IMR-90 (cell line): ENCODE measurements at regions of chr11 and their contacts with region 1.

Region 1: DNA sequence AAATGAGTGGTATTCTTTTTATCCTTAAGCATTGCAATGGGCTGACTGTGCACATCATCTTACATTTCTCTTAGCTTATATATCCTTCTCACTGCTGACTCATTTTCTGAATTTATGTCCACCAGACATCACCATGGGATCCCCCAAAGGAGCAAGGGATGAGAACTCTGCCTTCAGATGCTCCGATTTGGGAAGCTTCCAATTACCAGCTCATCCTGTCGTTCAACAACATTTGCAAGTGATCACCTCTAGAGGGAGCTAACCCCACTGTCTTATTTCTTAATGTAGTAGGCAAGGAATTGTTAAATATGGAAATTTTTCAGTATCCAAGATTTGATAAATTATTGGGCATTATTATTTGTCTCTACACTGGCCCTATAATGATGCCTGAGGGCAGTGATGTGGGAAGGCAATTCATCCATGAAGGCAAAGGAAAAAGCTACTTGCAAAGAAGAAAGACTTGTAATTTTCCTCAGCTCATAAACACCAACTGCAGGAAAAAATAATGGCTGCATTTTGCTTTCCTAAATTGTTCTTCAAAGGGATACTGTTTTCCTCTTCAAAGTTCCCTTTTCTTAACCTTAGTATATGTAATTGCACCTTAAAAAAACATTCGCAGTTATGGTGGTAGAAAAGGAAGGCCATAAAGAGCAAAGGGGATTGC is 102.4 kb upstream of the FSHB start:
- DNase-seq: peak; percentile 60
- ATAC-seq: peak; percentile 42; the same call in 1 of the 2 replicates
- H3K4me3 ChIP-seq: no peak overlapping the region
- H3K27ac ChIP-seq: no peak overlapping the region
- H3K4me1 ChIP-seq: no peaks in the 10 kb centered on the region
- H3K27me3 ChIP-seq: no peaks in the 10 kb centered on the region
- CTCF ChIP-seq: peak; percentile 61
- POLR2A ChIP-seq: no peak
- RAD21 ChIP-seq: peak; percentile 19; the same call in 1 of the 2 replicates

Region 2: GRCh38 chr11:30089921-30090320 is 38.5 kb before region 1 on chr11:
- CTCF ChIA-PET with region 1: no interaction called
- POLR2A ChIA-PET with region 1: no interaction called
- dilution Hi-C with region 1: no loop called
- in situ Hi-C with region 1: no loop called
- intact Hi-C with region 1: no loop called
- DNase-seq: no peak
- ATAC-seq: no peak
- H3K4me3 ChIP-seq: no peak overlapping the region
- H3K27ac ChIP-seq: no peak overlapping the region
- H3K4me1 ChIP-seq: no peaks in the 10 kb centered on the region
- H3K27me3 ChIP-seq: no peaks in the 10 kb centered on the region
- CTCF ChIP-seq: no peak
- POLR2A ChIP-seq: no peak
- RAD21 ChIP-seq: no peak

Region 3: GRCh38 chr11:30143098-30143705 is 14.8 kb after region 1 on chr11:
- CTCF ChIA-PET with region 1: interaction called, 19 read pairs
- POLR2A ChIA-PET with region 1: no interaction called
- dilution Hi-C with region 1: no loop called
- in situ Hi-C with region 1: no loop called
- intact Hi-C with region 1: no loop called
- DNase-seq: peak; percentile 15
- ATAC-seq: peak; percentile 83
- H3K4me3 ChIP-seq: no peak overlapping the region
- H3K27ac ChIP-seq: no peak overlapping the region
- H3K4me1 ChIP-seq: no peaks in the 10 kb centered on the region
- H3K27me3 ChIP-seq: no peaks in the 10 kb centered on the region
- CTCF ChIP-seq: peak; percentile 59
- POLR2A ChIP-seq: no peak
- RAD21 ChIP-seq: peak; percentile 40

Region 4: DNA sequence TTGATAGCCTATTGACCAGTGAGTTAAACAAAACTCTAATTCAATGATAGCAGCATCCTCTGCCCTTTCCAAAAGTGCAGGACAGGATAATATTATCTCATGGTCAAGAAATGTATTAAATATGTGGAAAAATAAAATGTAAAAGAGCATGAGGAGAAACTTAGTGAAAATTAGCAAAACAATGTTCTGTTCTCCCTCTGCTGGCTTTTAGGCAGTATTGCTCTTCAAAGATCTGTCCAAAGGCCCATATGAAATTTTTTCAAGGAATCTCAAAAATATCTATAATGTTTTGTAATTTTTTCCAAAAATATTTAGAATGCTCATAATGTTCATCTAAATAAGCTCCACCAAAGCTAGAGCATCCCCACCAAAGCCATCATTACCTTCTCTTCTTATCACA is 186.2 kb after region 1 on chr11:
- CTCF ChIA-PET with region 1: no interaction called
- POLR2A ChIA-PET with region 1: no interaction called
- dilution Hi-C with region 1: no loop called
- in situ Hi-C with region 1: no loop called
- intact Hi-C with region 1: loop called (anchors 5 kb)
- DNase-seq: peak; percentile 34
- ATAC-seq: no peak
- H3K4me3 ChIP-seq: no peak overlapping the region
- H3K27ac ChIP-seq: no peak overlapping the region
- H3K4me1 ChIP-seq: no peaks in the 10 kb centered on the region
- H3K27me3 ChIP-seq: peaks cover 4% of the 10 kb centered on the region; the same call in 1 of the 2 replicates
- CTCF ChIP-seq: peak; percentile 44
- POLR2A ChIP-seq: no peak
- RAD21 ChIP-seq: peak; percentile 32; the same call in 1 of the 2 replicates